GM12878 (cell line): ENCODE measurements at regions of chr21 and their contacts with region 1.

Region 1: DNA sequence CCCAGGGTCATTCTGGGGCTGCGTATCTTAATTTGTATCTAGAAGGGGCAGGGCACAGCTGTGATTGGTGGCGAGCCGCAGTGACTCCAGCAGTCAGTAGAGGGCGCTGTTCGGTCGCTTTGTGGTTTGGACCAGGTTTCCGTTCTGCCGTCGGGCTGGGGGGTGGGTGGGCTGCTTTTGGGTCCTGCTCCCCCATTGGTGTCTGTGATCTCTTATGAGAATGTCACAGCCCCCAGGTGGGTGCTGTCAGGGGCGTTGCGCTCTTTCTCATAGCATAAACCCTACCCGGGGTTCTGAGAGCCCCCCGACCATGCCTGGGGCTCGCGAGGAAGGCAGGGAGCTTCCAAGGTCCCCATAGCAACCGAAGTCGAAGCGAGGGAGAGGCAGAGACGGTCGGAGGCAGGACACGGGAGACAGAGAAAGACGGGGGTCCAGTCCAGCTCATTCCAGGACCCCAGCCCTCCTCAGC is 5.4 kb downstream of the TFF3 start:
- DNase-seq: no peak
- ATAC-seq: peak; percentile 86
- H3K4me3 ChIP-seq: no peak overlapping the region
- H3K27ac ChIP-seq: no peak overlapping the region
- H3K4me1 ChIP-seq: no peaks in the 10 kb centered on the region
- H3K27me3 ChIP-seq: no peaks in the 10 kb centered on the region
- CTCF ChIP-seq: peak; percentile 77 to 92 (median 90)
- EP300 ChIP-seq: no peak
- POLR2A ChIP-seq: no peak
- RAD21 ChIP-seq: peak; percentile 90

Region 2: DNA sequence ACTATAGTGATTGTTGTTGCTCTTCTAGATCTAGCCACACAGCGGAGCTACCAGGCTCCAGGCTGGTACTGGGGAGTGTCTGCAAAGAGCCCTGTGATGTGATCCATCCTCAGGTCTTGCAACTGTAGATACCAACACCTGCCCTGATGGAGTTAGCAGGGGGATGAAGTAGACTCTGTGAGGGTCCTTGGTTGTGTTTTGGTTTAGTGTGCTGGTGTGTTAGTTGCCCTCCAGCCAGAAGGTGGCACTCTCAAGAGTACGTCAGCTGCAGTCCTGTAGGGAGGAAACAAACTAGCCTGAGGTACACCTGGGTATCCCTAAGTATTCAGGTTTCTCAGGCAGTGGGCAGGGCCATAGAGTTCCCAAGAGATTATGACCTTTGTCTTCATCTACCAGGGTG is 720.7 kb before region 1 on chr21:
- CTCF ChIA-PET with region 1: no interaction called
- POLR2A ChIA-PET with region 1: no interaction called
- RAD21 ChIA-PET with region 1: no interaction called
- SMC1A ChIA-PET with region 1: no interaction called
- in situ Hi-C with region 1: no loop called
- intact Hi-C with region 1: no loop called
- DNase-seq: no peak
- ATAC-seq: no peak
- H3K4me3 ChIP-seq: no peak overlapping the region
- H3K27ac ChIP-seq: no peak overlapping the region
- H3K4me1 ChIP-seq: no peaks in the 10 kb centered on the region
- H3K27me3 ChIP-seq: no peaks in the 10 kb centered on the region
- CTCF ChIP-seq: peak in 1 of 3 experiments; percentile 14; a peak in 1 of 6 replicates
- EP300 ChIP-seq: no peak
- POLR2A ChIP-seq: no peak
- RAD21 ChIP-seq: no peak

Region 3: GRCh38 chr21:42324896-42325295 is 15.1 kb after region 1 on chr21:
- CTCF ChIA-PET with region 1: interaction called, 22 read pairs
- POLR2A ChIA-PET with region 1: no interaction called
- RAD21 ChIA-PET with region 1: interaction called, 7 read pairs
- SMC1A ChIA-PET with region 1: interaction called, 5 read pairs
- in situ Hi-C with region 1: no loop called
- intact Hi-C with region 1: no loop called
- DNase-seq: no peak
- ATAC-seq: no peak
- H3K4me3 ChIP-seq: no peak overlapping the region
- H3K27ac ChIP-seq: no peak overlapping the region
- H3K4me1 ChIP-seq: no peaks in the 10 kb centered on the region
- H3K27me3 ChIP-seq: no peaks in the 10 kb centered on the region
- CTCF ChIP-seq: no peak
- EP300 ChIP-seq: no peak
- POLR2A ChIP-seq: no peak
- RAD21 ChIP-seq: no peak

Region 4: GRCh38 chr21:42337830-42338728 is 28.3 kb after region 1 on chr21:
- CTCF ChIA-PET with region 1: interaction called, 20 read pairs
- POLR2A ChIA-PET with region 1: no interaction called
- RAD21 ChIA-PET with region 1: interaction called, 9 read pairs
- SMC1A ChIA-PET with region 1: interaction called, 19 read pairs
- in situ Hi-C with region 1: no loop called
- intact Hi-C with region 1: no loop called
- DNase-seq: no peak
- ATAC-seq: peak; percentile 90
- H3K4me3 ChIP-seq: no peak overlapping the region
- H3K27ac ChIP-seq: no peak overlapping the region
- H3K4me1 ChIP-seq: peaks cover 13% of the 10 kb centered on the region
- H3K27me3 ChIP-seq: no peaks in the 10 kb centered on the region
- CTCF ChIP-seq: peak; percentile 50 to 62 (median 53)
- EP300 ChIP-seq: no peak
- POLR2A ChIP-seq: no peak
- RAD21 ChIP-seq: peak; percentile 81

Region 5: DNA sequence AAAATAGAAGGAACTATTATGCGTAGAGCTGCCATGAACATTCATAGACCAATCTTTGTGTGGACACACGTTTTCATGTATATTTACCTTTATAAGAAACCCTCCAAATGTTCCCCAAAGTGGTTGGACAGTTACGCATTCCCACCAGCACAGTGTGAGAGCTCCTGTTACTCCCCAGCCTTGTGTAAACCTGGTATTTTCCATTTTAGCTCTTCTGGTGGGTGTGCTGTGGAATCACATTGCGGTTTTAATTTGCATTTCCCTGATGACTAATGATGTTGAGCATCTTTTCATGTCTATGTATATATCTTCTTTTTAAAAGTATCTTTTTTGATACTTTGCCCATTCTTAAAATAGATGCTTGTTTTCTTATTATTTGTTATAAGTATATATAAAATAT is 90.7 kb after region 1 on chr21:
- CTCF ChIA-PET with region 1: interaction called, 3 read pairs
- POLR2A ChIA-PET with region 1: no interaction called
- RAD21 ChIA-PET with region 1: interaction called, 10 read pairs
- SMC1A ChIA-PET with region 1: interaction called, 3 read pairs
- in situ Hi-C with region 1: no loop called
- intact Hi-C with region 1: no loop called
- DNase-seq: peak; percentile 68
- ATAC-seq: peak; percentile 82
- H3K4me3 ChIP-seq: no peak overlapping the region
- H3K27ac ChIP-seq: peak overlapping the region; percentile 2; the same call in 1 of the 2 replicates
- H3K4me1 ChIP-seq: peaks cover 10% of the 10 kb centered on the region; the same call in 1 of the 2 replicates
- H3K27me3 ChIP-seq: no peaks in the 10 kb centered on the region
- CTCF ChIP-seq: no peak
- EP300 ChIP-seq: no peak
- POLR2A ChIP-seq: no peak
- RAD21 ChIP-seq: no peak

Region 6: DNA sequence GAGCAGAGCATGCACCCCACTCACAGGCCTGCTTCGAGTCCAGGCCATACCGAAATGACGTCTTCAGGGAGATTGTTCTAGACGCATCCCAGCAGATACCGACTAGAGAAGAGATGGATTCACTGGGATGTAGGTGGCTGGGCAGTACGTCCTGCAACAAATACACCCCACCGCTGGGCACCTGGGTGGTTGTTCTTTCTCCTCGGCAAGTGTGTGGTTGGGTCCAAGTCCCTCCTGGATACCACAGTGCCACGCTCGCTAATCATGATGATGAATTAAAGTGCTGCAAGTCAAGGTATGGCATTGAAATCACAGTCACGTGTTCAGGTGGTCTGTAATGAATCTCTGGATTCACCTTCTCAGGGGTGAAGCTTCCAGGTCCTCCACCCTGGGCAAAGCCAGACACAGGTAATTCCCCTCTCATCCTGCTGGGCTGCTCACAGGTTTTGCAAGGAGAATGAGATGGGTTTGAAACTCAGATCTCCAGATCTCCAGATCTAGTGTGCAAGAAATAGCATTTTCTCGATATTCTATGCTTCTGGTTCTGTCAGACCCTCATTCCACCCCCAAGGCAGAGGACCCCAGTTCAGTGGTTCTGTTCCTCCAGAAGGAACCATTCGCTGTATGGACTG is 139.6 kb after region 1 on chr21:
- CTCF ChIA-PET with region 1: interaction called, 37 read pairs
- POLR2A ChIA-PET with region 1: no interaction called
- RAD21 ChIA-PET with region 1: interaction called, 17 read pairs
- SMC1A ChIA-PET with region 1: interaction called, 22 read pairs
- in situ Hi-C with region 1: loop called (anchors 5 kb)
- intact Hi-C with region 1: loop called (anchors 1 kb)
- DNase-seq: no peak
- ATAC-seq: peak; percentile 16
- H3K4me3 ChIP-seq: no peak overlapping the region
- H3K27ac ChIP-seq: peak overlapping the region; percentile 43
- H3K4me1 ChIP-seq: peaks cover 17% of the 10 kb centered on the region
- H3K27me3 ChIP-seq: no peaks in the 10 kb centered on the region
- CTCF ChIP-seq: no peak
- EP300 ChIP-seq: no peak
- POLR2A ChIP-seq: no peak
- RAD21 ChIP-seq: no peak

Region 7: GRCh38 chr21:42460391-42461204 is 150.8 kb after region 1 on chr21:
- CTCF ChIA-PET with region 1: interaction called, 9 read pairs
- POLR2A ChIA-PET with region 1: no interaction called
- RAD21 ChIA-PET with region 1: interaction called, 11 read pairs
- SMC1A ChIA-PET with region 1: interaction called, 5 read pairs
- in situ Hi-C with region 1: no loop called
- intact Hi-C with region 1: no loop called
- DNase-seq: peak; percentile 83
- ATAC-seq: peak; percentile 71
- H3K4me3 ChIP-seq: no peak overlapping the region
- H3K27ac ChIP-seq: peak overlapping the region; percentile 60
- H3K4me1 ChIP-seq: peaks cover 52% of the 10 kb centered on the region
- H3K27me3 ChIP-seq: no peaks in the 10 kb centered on the region
- CTCF ChIP-seq: no peak
- EP300 ChIP-seq: peak; percentile 59 to 97; a peak in 3 of 4 replicates
- POLR2A ChIP-seq: no peak
- RAD21 ChIP-seq: no peak